ENCODE measurements at regions of chr20 and their contacts with region 1.

Region 1: DNA sequence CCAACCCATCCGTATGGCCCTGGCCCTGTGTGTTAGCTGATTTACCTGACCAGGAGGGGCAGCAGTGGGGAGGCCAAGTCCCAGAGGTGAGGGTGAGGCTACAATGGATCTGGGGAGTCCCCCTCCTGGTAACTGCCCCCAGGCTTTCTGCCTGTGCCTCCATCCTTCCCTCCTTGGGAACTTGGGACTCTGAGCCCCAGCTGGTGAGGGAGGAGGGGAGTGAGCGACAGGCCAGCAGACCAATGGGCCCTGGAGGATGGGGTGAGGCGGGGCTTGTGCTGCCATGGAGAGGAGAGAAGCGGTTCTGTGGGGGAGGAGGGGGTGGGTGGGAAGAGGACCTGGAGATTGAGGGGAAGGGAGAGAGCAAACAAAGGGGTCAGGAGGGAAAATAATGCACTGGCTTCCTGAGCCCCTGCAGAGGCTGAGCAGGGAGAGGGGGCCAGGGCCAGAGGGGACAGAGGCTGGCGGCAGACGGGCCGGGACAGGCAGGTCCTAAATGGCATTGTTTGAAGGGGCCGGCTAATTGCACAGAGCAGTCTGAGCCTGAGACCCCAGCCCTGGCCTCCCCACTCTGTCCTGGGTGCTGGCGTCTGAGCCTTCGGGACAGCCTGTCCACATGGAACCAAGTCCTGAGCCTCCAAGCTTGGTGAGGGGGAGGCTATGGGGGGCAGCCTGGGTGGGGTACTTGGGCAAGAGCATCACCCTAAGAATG is 17.5 kb downstream of the DNMT3B start:
- DNase-seq: no peak
- ATAC-seq: no peak
- H3K4me3 ChIP-seq: no peak overlapping the region
- H3K27ac ChIP-seq: no peak overlapping the region
- H3K4me1 ChIP-seq: peaks cover 14% of the 10 kb centered on the region
- H3K27me3 ChIP-seq: no peaks in the 10 kb centered on the region
- CTCF ChIP-seq: peak; percentile 17; the same call in 1 of the 2 replicates

Region 2: DNA sequence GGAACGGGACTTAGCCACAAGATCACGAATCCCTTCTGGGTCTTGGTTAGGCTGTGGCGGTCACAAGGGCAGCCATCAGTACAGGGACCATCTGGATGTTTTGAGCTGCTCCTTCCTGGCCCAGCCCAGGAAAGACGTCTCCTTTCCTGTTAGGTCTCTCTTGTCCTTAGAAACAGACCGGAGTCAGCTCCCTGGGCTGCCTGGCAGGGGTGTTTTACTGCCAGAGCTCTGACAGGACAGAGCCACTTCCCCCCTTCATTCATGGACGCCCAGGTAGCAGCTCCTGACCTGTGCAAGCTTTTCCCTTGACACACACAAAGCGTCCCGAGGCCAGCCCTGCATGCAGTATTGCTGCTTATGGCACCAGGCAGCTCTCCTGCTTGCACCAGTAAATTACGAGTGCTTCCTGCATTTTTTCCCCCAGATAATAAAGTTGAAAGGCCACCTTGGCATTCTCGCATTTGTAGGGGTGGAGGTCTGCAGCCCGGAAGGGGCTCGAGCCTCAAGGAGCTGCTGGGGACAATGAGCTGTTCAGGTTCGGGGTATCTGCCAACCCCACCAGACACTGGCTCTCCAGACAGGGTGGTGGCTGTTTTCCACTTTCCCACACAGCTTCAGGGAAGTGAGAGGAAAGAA is 281.9 kb before region 1 on chr20:
- CTCF ChIA-PET with region 1: no interaction called
- POLR2A ChIA-PET with region 1: interaction called, 24 read pairs
- intact Hi-C with region 1: no loop called
- DNase-seq: no peak
- ATAC-seq: no peak
- H3K4me3 ChIP-seq: no peak overlapping the region
- H3K27ac ChIP-seq: no peak overlapping the region
- H3K4me1 ChIP-seq: peaks cover 13% of the 10 kb centered on the region
- H3K27me3 ChIP-seq: no peaks in the 10 kb centered on the region
- CTCF ChIP-seq: no peak

Region 3: GRCh38 chr20:32674362-32674789 is 105.3 kb before region 1 on chr20:
- CTCF ChIA-PET with region 1: interaction called, 83 read pairs
- POLR2A ChIA-PET with region 1: no interaction called
- intact Hi-C with region 1: loop called (anchors 1 kb)
- DNase-seq: peak; percentile 82
- ATAC-seq: peak; percentile 74
- H3K4me3 ChIP-seq: no peak overlapping the region
- H3K27ac ChIP-seq: no peak overlapping the region
- H3K4me1 ChIP-seq: peaks cover 10% of the 10 kb centered on the region
- H3K27me3 ChIP-seq: no peaks in the 10 kb centered on the region
- CTCF ChIP-seq: peak; percentile 91

Region 4: GRCh38 chr20:32681175-32682084 is 98.2 kb before region 1 on chr20:
- CTCF ChIA-PET with region 1: interaction called, 15 read pairs
- POLR2A ChIA-PET with region 1: interaction called, 3 read pairs
- intact Hi-C with region 1: no loop called
- DNase-seq: peak; percentile 84
- ATAC-seq: peak; percentile 92
- H3K4me3 ChIP-seq: no peak overlapping the region
- H3K27ac ChIP-seq: no peak overlapping the region
- H3K4me1 ChIP-seq: peaks cover 26% of the 10 kb centered on the region
- H3K27me3 ChIP-seq: no peaks in the 10 kb centered on the region
- CTCF ChIP-seq: peak; percentile 31; the same call in 1 of the 2 replicates

Region 5: DNA sequence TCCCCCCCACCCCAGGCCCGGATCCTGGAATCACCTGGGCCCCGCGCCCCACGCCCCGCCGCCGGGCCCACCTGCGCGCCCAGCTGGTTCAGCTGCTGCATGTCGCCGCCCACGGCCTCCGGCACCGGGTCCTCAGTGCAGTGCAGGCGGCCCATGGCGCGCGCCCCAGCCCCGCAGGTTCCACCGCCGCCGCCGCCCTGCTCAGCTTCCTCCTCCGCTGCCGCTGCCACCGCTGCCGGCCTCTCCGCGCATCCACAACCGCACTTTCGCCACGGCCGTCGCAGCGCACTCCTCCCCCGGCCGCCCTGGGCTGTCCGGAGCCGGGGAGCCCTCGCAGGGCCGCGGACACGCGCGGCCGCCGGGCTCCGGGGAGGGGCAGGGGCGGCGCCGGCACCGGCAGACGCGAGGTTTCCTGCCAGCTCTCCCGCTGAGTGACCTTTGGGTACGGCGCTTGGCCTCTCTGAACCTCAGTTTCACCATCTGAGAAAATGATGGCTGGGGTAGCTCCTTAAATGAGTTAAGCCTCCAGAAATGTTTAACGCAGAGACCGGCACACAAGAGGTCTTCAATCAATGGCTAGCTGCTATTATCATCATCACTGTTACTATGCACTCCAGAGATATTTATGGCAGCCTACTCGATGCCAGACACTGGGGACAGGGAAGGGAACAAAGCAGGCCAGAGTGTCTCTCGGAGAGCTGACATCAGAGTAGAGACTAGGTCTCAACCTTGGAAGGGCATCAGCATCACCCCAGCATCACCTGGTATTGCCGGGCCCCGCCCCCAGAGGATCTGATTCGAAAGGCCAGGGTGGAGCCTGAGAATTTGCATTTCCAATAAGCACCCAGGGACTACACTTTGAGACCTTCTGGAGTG is 36.2 kb before region 1 on chr20 and contains the start of gene COMMD7:
- CTCF ChIA-PET with region 1: interaction called, 17 read pairs
- POLR2A ChIA-PET with region 1: no interaction called
- intact Hi-C with region 1: no loop called
- DNase-seq: peak; percentile 59
- ATAC-seq: peak; percentile 53
- H3K4me3 ChIP-seq: peak within 1 kb of the TSS; percentile 79
- H3K27ac ChIP-seq: no peak within 1 kb of the TSS
- H3K4me1 ChIP-seq: peaks cover 28% of the 10 kb centered on the region
- H3K27me3 ChIP-seq: no peaks in the 10 kb centered on the region
- CTCF ChIP-seq: no peak
- total RNA-seq, gene COMMD7: 32.5 and 33.5 TPM in 2 replicates

Region 6: DNA sequence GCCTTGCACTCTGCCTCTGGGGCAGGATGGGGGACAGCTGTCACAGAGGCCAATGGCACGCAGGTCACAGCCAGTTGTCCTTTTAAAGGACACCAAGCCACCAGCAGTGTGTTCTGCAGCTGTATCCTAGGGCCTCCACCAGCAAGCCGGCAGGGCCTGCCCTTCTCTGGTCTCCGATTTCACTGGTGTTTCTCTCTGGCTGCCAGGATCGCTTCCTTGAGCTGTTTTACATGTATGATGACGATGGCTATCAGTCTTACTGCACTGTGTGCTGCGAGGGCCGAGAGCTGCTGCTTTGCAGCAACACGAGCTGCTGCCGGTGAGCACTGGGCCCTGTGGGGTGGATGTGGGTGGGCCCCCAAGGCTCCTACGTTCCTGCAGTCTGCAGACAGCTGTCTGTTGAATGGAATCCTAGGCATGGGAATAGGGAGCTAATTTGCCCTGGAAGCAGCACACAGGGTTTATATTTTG is 17.4 kb after region 1 on chr20:
- CTCF ChIA-PET with region 1: no interaction called
- POLR2A ChIA-PET with region 1: no interaction called
- intact Hi-C with region 1: no loop called
- DNase-seq: no peak
- ATAC-seq: no peak
- H3K4me3 ChIP-seq: no peak overlapping the region
- H3K27ac ChIP-seq: no peak overlapping the region
- H3K4me1 ChIP-seq: no peaks in the 10 kb centered on the region
- H3K27me3 ChIP-seq: no peaks in the 10 kb centered on the region
- CTCF ChIP-seq: no peak

Region 7: GRCh38 chr20:33113387-33113908 is 333.8 kb after region 1 on chr20:
- CTCF ChIA-PET with region 1: no interaction called
- POLR2A ChIA-PET with region 1: no interaction called
- intact Hi-C with region 1: no loop called
- DNase-seq: no peak
- ATAC-seq: no peak
- H3K4me3 ChIP-seq: no peak overlapping the region
- H3K27ac ChIP-seq: no peak overlapping the region
- H3K4me1 ChIP-seq: no peaks in the 10 kb centered on the region
- H3K27me3 ChIP-seq: peaks cover 18% of the 10 kb centered on the region
- CTCF ChIP-seq: no peak